ENCODE measurements at regions of chr1 and their contacts with region 1.

Region 1: DNA sequence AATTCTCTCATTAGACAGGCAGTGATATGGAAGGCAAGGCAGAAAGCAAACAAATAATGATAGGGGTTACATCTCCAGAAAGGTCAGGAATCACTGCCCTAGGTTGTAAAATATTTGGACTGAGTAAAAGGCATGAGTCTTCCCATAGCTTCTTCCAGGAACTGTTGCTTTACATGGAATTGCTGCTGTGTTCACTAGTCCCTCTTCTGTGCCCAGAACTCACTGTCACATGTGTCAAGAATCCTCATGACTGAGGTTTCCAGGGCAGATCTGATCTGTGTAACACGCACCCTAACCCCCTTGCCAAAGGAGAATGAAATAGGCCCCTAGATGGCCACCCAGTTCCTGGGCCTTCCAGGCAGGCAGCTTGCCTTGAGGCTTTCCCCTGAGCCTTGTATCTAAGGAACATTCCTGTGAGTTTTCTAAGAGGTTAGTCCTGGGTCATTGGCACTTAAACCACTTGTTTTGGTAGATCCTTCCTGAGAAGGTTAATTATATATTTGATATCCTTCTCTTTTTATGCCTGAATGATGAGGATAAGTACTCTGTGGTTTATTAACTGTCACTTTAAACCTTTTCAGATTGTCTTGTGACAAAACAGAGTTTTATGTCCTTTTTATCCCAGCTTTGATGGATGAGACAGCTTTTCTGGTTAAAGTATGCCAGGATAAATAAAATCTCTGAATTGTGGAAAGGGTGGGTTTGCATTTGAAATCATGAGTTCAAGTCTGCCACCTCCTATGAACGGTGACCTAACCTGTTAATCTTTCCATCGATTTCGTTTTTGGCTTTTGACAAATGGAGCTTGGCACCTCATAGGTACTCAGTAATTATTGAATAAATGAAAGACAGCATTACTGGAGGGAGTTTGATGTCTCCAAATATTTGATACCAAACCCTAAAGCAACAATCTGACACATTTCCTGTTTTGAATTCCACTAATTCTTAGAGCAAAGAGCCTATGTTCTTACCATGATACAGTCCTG is 163.3 kb downstream of the DHRS3 start:
- DNase-seq: peak; percentile 85 to 88
- ATAC-seq: peak; percentile 55 to 67
- H3K4me3 ChIP-seq: no peak overlapping the region
- H3K27ac ChIP-seq: peak overlapping the region; percentile 84 to 91 (median 90)
- H3K4me1 ChIP-seq: peaks cover 71 to 84% of the 10 kb centered on the region in 2 donors
- H3K27me3 ChIP-seq: no peaks in the 10 kb centered on the region
- CTCF ChIP-seq: no peak
- POLR2A ChIP-seq: peak in 1 of 2 donors; percentile 37

Region 2: DNA sequence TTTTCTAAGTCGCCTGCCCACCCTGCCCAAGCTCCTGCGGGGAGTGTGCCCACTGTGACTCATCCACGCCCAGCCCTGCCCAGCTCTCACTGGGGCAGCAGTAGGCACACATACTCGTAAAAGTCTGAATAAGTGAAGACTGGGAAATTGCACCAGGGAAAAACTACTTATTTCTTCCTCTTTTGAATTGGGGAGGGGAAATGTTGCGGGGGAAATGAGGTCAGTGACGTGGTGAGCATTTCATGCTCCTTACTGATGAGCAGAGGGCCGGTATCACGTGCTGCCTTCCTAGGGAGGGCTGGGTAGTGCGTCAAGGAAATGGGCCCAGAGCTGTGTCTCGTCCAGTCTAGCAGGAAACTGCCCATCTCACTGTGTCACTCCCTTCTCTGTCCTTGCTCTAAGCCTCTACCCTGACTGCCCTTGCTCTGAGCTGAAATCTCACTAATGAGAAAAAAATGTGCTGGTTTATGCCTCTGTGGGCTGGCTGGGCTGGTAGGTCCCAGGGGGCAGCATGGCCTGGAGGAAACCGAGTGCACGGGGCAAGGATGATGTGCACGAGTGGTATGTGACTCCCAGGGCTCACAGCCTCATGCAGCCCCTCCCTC is 301.4 kb before region 1 on chr1:
- in situ Hi-C with region 1: no loop called
- intact Hi-C with region 1: no loop called
- DNase-seq: peak in 1 of 2 donors; percentile 59
- ATAC-seq: peak; percentile 59 to 68
- H3K4me3 ChIP-seq: no peak overlapping the region
- H3K27ac ChIP-seq: peak overlapping the region; percentile 25 to 59 (median 48)
- H3K4me1 ChIP-seq: peaks cover 0 to 13% of the 10 kb centered on the region in 2 donors
- H3K27me3 ChIP-seq: no peaks in the 10 kb centered on the region
- CTCF ChIP-seq: no peak
- POLR2A ChIP-seq: peak in 1 of 2 donors; percentile 46

Region 3: DNA sequence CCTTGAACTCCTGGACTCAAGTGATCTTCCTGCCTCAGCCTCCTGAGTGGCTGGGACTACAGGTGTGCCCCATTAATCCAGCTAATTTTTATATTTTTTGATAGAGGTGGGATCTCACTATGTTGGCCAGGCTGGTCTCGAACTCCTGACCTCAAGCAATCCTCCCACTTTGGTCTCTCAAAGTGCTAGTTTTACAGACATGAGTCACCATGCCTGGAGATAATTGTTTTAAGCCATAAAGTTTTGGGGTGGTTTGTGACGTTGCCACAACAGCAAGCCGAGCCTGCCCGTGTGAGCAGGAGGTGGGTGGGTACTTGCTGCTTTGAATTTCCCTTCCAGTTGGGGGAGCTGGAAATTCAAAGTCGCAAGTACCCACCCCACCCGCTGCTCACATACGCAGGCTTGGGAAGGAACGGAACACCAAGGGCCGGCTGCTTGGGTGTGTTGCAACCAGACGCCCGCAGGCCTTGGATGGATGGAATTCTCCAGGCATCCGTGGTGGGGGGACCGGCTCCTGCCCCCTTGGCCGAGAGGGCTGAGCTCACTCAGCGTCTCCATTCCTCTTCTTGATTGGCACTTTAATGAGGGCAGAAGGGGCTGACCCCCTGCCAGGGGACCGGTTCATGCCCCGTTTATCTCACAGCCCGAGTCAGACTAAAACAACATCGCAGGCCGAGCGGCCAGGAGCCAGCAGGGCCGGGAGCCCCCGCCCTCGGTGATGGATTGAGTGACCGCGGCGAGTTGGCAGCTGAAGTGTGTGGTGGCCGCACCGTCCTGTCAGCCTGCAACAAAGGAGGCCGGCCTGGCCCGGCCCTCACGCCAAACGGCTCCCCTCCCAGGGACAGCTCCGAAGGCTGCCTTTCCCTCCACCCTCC is 85.2 kb after region 1 on chr1:
- in situ Hi-C with region 1: no loop called
- intact Hi-C with region 1: loop called (anchors 5 kb)
- DNase-seq: peak; percentile 77 to 89
- ATAC-seq: peak; percentile 83 to 91
- H3K4me3 ChIP-seq: peak overlapping the region; percentile 22 to 40 (median 37)
- H3K27ac ChIP-seq: peak overlapping the region; percentile 75 to 83 (median 81)
- H3K4me1 ChIP-seq: peaks cover 13 to 18% of the 10 kb centered on the region in 2 donors
- H3K27me3 ChIP-seq: no peaks in the 10 kb centered on the region
- CTCF ChIP-seq: no peak
- POLR2A ChIP-seq: peak in 1 of 2 donors; percentile 12

Region 4: DNA sequence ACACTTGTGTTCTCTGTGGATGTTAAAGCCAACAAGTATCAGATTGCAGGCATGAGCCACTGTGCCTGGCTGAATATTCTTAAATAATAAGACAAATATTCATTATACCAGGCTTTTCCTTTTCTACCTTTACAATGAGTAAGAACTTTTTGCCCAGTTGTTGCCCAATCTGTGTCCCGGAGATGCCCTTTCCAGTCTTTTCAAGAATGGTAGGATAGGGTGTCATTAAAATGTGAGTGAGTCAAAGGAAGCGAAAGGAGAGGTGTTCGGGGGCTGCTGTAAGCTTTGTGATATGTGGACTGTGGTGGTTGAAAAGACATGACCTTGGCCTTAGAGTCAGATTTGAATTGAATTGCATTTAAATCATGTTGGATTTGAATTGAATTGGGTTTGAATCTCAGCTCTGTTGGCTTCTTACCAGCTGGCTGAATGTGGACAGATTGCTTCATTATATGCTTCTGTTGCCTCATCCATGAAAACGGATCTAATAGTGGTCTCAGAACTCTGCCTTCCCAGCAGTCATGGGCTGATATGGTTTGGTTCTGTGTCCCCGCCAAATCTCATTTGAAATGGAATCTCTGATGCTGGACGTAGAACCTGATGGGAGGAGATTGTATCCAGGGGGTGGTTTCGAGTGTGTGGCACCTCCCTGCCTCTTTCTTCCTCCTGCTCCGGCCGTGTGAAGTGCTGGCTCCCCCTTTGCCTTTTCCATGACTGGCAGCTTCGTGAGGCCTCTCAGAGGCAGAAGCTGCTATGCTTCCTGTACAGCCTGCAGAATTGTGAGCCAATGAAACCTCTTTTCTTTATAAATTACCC is 238.5 kb after region 1 on chr1:
- in situ Hi-C with region 1: no loop called
- intact Hi-C with region 1: no loop called
- DNase-seq: peak; percentile 60 to 87
- ATAC-seq: peak; percentile 89 to 94
- H3K4me3 ChIP-seq: peak overlapping the region in 3 of 4 donors; percentile 7 to 25 (median 8)
- H3K27ac ChIP-seq: peak overlapping the region; percentile 83 to 85 (median 84)
- H3K4me1 ChIP-seq: peaks cover 14 to 18% of the 10 kb centered on the region in 2 donors
- H3K27me3 ChIP-seq: no peaks in the 10 kb centered on the region
- CTCF ChIP-seq: no peak
- POLR2A ChIP-seq: no peak

Measured in gastrocnemius medialis (tissue), 4 donors.